ENCODE measurements at regions of chr6 and their contacts with region 1.

Region 1: DNA sequence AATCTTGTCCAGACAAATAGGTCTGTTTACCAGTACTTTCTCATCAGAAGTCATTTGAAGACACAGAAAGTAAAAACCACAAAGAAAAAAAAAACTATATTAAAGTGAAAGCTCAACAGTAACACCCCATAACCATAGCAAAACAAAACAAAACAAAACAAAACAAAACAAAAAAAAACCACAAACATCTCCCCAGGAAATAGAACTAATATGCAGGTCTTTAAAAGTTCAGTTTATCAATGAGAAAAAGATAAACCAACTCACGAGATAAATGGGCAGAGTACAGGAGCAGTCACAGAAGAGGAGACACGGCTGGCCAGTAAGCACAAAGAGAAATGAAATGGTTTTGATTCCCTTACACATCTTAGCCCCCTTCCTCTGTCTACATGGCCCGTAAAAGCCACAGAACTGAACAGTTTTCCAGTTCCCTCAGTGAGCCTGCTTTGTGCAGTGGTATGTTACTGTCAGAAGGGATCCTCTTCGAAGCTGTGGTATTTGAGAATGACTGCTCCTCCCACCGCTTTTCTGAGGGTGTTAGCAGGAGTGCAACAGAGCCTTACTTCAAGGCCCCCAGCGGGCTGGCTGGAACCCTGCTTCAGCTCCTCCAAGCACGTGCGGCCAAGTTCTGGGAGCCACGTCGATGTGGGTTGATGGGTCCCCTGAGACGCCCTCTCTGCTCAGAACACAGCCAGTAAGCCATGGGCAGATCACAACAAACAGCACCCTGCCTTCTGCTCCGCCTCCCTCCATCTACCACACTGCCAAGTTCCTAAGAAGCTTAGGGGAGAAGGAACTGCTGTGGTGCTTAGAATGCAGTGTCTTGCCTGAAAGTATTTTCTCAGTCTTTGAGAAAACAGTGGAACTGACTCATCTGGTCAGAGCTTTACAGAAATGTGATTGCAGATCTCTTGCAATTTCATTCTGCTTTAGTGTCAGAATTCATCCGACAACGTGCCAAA is 14.0 kb downstream of the UST start:
- DNase-seq: peak; percentile 77 to 87 (median 84)
- H3K4me3 ChIP-seq: peak overlapping the region; percentile 20 to 42
- H3K4me3 Mint-ChIP-seq: peak overlapping the region; percentile 79 to 88 (median 84)
- H3K27ac ChIP-seq: peak overlapping the region; percentile 83
- H3K27ac Mint-ChIP-seq: peak overlapping the region; percentile 91 to 99 (median 96)
- H3K4me1 ChIP-seq: peaks cover 63% of the 10 kb centered on the region
- H3K4me1 Mint-ChIP-seq: peaks cover 67 to 94% (median 76%) of the 10 kb centered on the region in 4 donors
- H3K27me3 ChIP-seq: no peaks in the 10 kb centered on the region
- H3K27me3 Mint-ChIP-seq: no peaks in the 10 kb centered on the region

Region 2: GRCh38 chr6:148557796-148558321 is 203.0 kb before region 1 on chr6:
- CTCF ChIA-PET with region 1: no interaction called
- POLR2A ChIA-PET with region 1: no interaction called
- intact Hi-C with region 1: no loop called
- DNase-seq: peak in 1 of 5 donors; percentile 11
- H3K4me3 ChIP-seq: no peak overlapping the region
- H3K4me3 Mint-ChIP-seq: peak overlapping the region in 4 of 8 donors; percentile 6 to 74 (median 50)
- H3K27ac ChIP-seq: no peak overlapping the region
- H3K27ac Mint-ChIP-seq: peak overlapping the region in 2 of 7 donors; percentile 23 to 24
- H3K4me1 ChIP-seq: peaks cover 8% of the 10 kb centered on the region
- H3K4me1 Mint-ChIP-seq: peaks cover 7 to 10% (median 8%) of the 10 kb centered on the region in 4 donors
- H3K27me3 ChIP-seq: no peaks in the 10 kb centered on the region
- H3K27me3 Mint-ChIP-seq: peaks cover 8 to 9% of the 10 kb centered on the region in 2 donors

Region 3: DNA sequence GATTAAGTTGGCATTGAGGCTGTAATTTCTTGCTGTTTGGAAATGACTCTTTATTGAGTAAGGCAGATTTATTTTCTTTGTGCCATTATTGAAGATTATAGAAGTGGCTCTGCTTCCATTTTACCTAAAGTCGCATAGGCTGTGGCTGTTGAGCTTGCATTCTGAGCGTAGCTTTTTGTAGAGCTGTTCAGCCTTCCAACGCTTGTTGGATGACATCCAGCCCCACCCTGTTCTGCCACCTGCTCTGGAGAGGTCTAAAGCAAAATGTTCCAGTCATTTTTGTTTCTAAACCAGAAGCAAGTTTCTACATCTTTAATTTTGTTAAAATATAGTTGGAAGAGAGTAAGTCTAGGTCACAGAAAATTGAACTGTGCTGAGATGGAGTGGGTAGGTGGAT is 10.4 kb after region 1 on chr6:
- CTCF ChIA-PET with region 1: interaction called, 12 read pairs
- POLR2A ChIA-PET with region 1: interaction called, 30 read pairs
- intact Hi-C with region 1: loop called (anchors 2 kb)
- DNase-seq: no peak
- H3K4me3 ChIP-seq: no peak overlapping the region
- H3K4me3 Mint-ChIP-seq: peak overlapping the region in 6 of 8 donors; percentile 19 to 78 (median 54)
- H3K27ac ChIP-seq: no peak overlapping the region
- H3K27ac Mint-ChIP-seq: peak overlapping the region; percentile 58 to 85 (median 77)
- H3K4me1 ChIP-seq: peaks cover 41% of the 10 kb centered on the region
- H3K4me1 Mint-ChIP-seq: peaks cover 26 to 50% (median 45%) of the 10 kb centered on the region in 4 donors
- H3K27me3 ChIP-seq: no peaks in the 10 kb centered on the region
- H3K27me3 Mint-ChIP-seq: no peaks in the 10 kb centered on the region

Region 4: DNA sequence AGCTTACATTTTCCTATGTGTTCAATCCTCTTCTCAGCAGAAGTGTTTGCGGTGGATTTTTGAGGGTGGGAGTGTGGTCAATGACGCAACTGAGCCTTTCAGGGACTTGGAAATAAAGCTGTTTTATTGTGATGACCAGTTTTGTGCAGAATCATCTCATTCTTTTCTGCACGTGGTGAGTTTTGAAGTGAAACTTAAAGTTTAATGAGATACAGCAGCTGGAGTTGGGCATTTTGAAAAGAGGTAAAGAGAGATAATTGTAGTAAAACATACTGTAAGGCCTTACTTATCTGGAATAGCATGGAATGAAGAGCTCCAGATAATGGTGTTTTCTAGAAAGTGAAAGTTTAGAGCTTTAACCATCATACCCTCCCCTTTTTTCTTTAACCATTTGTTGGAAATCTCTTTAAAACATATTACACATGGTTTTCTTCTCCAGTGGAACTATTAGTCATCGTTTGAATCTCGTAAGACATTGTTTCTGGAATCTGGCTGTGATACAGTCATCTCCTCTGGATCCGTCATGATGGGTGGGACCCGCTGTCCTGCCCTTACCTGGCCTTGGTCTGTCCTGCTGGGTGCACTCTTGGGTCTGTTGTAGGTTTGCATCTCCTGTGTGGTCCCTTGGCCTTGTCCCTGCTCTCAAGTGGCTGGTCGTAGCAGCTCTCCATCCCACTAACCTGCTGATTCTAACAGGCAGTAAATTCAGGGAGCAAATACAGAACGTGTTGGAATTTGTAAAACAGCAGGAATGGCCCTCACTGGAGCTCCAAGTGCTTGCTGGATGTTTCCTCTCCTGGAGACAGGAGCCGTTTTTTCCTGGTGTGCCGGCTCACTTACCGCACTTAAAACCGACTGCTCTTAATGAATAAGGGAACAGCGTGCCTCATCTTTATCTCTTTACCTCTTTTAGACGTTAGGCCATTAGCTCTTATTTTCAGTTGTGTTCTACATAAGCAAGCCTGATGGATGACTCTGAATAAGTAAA is 15.8 kb after region 1 on chr6:
- CTCF ChIA-PET with region 1: interaction called, 12 read pairs
- POLR2A ChIA-PET with region 1: interaction called, 30 read pairs
- intact Hi-C with region 1: loop called (anchors 2 kb)
- DNase-seq: no peak
- H3K4me3 ChIP-seq: no peak overlapping the region
- H3K4me3 Mint-ChIP-seq: peak overlapping the region in 3 of 8 donors; percentile 49 to 51 (median 49)
- H3K27ac ChIP-seq: no peak overlapping the region
- H3K27ac Mint-ChIP-seq: peak overlapping the region in 4 of 7 donors; percentile 5 to 72 (median 10)
- H3K4me1 ChIP-seq: peaks cover 27% of the 10 kb centered on the region
- H3K4me1 Mint-ChIP-seq: peaks cover 20 to 40% (median 35%) of the 10 kb centered on the region in 4 donors
- H3K27me3 ChIP-seq: no peaks in the 10 kb centered on the region
- H3K27me3 Mint-ChIP-seq: no peaks in the 10 kb centered on the region

Region 5: GRCh38 chr6:148831064-148831463 is 70.2 kb after region 1 on chr6:
- CTCF ChIA-PET with region 1: no interaction called
- POLR2A ChIA-PET with region 1: interaction called, 8 read pairs
- intact Hi-C with region 1: loop called (anchors 5 kb)
- DNase-seq: peak; percentile 41 to 65 (median 51)
- H3K4me3 ChIP-seq: peak overlapping the region in 1 of 2 donors; percentile 29
- H3K4me3 Mint-ChIP-seq: peak overlapping the region; percentile 65 to 90 (median 82)
- H3K27ac ChIP-seq: peak overlapping the region; percentile 32
- H3K27ac Mint-ChIP-seq: peak overlapping the region; percentile 31 to 90 (median 66)
- H3K4me1 ChIP-seq: peaks cover 33% of the 10 kb centered on the region
- H3K4me1 Mint-ChIP-seq: peaks cover 29 to 67% (median 42%) of the 10 kb centered on the region in 4 donors
- H3K27me3 ChIP-seq: no peaks in the 10 kb centered on the region
- H3K27me3 Mint-ChIP-seq: no peaks in the 10 kb centered on the region

Region 6: GRCh38 chr6:148947621-148948444 is 187.0 kb after region 1 on chr6:
- CTCF ChIA-PET with region 1: interaction called, 9 read pairs
- POLR2A ChIA-PET with region 1: no interaction called
- intact Hi-C with region 1: loop called (anchors 1 kb)
- DNase-seq: peak; percentile 70 to 82 (median 79)
- H3K4me3 ChIP-seq: no peak overlapping the region
- H3K4me3 Mint-ChIP-seq: no peak overlapping the region
- H3K27ac ChIP-seq: no peak overlapping the region
- H3K27ac Mint-ChIP-seq: no peak overlapping the region
- H3K4me1 ChIP-seq: no peaks in the 10 kb centered on the region
- H3K4me1 Mint-ChIP-seq: peaks cover 0 to 5% (median 4%) of the 10 kb centered on the region in 4 donors
- H3K27me3 ChIP-seq: no peaks in the 10 kb centered on the region
- H3K27me3 Mint-ChIP-seq: no peaks in the 10 kb centered on the region

Region 7: GRCh38 chr6:149473080-149474052 is 712.5 kb after region 1 on chr6:
- CTCF ChIA-PET with region 1: no interaction called
- POLR2A ChIA-PET with region 1: no interaction called
- intact Hi-C with region 1: no loop called
- DNase-seq: peak in 4 of 5 donors; percentile 38 to 58 (median 48)
- H3K4me3 ChIP-seq: no peak overlapping the region
- H3K4me3 Mint-ChIP-seq: peak overlapping the region; percentile 59 to 83 (median 68)
- H3K27ac ChIP-seq: peak overlapping the region; percentile 40
- H3K27ac Mint-ChIP-seq: peak overlapping the region; percentile 84 to 92 (median 88)
- H3K4me1 ChIP-seq: peaks cover 93% of the 10 kb centered on the region
- H3K4me1 Mint-ChIP-seq: peaks cover 49 to 85% (median 71%) of the 10 kb centered on the region in 4 donors
- H3K27me3 ChIP-seq: no peaks in the 10 kb centered on the region
- H3K27me3 Mint-ChIP-seq: no peaks in the 10 kb centered on the region

Measured in CD4-positive, alpha-beta memory T cell (primary cell).